ENCODE measurements at regions of chr1 and their contacts with region 1.

Region 1: DNA sequence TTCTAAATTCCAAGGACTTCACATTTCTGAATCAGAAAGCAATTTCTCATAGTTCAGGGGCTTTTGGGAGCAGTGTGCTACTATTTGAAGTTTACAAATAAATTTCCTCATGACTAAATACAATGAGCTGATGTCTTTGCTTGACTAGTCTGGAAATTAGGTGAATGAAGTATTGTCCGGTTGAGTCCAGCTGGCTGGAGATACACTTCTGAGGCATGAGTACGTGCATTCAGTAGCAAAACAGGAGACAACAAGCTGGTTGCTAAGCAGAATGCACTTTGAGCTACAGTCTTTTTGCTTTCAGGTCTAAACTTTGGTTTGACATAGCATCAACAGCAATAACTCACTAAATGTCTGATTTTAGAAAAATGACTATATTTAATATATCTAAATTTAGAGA is 27.1 kb downstream of the ZNHIT6 start:
- DNase-seq: peak in 1 of 2 experiments; percentile 69
- H3K4me3 ChIP-seq: no peak overlapping the region
- H3K27ac ChIP-seq: no peak overlapping the region
- H3K4me1 ChIP-seq: no peaks in the 10 kb centered on the region
- H3K27me3 ChIP-seq: no peaks in the 10 kb centered on the region
- CTCF ChIP-seq: no peak

Region 2: GRCh38 chr1:85865213-85865612 is 184.1 kb after region 1 on chr1:
- CTCF ChIA-PET with region 1: no interaction called
- POLR2A ChIA-PET with region 1: no interaction called
- intact Hi-C with region 1: no loop called
- DNase-seq: no peak
- H3K4me3 ChIP-seq: no peak overlapping the region
- H3K27ac ChIP-seq: no peak overlapping the region
- H3K4me1 ChIP-seq: no peaks in the 10 kb centered on the region
- H3K27me3 ChIP-seq: no peaks in the 10 kb centered on the region
- CTCF ChIP-seq: no peak

Region 3: DNA sequence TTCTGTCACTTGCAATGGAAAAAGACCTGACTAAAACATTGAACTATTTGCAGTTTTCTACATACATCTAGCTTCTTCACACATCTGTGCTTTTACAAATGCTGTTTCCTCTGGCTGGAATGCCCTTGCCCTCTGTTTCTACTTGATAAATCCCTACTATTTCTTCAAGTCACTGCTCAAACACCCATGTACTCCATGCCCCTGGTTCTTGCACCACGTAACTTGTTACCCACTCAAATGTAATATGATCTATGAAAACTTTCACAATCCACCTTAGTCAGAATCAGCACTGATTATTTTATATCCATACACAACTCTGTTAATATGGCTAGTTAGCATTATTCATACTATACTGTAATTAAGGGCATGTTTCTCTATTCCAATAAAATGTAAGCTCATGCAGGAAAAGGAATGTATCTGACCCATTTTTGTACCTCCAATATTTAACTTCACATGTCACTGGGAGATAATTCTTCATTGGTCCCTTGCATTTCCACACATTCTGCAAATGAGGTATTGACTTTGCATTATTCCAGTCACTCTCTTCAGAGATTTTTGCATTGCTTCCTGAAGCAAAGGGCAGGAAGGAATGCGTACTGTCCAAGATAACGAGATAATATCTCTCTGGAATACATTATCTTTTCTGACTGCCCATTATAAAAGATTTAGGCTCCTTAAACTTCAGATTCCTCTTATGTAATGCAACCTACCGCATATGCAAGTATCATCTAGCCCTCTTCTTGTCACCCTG is 317.2 kb after region 1 on chr1:
- CTCF ChIA-PET with region 1: interaction called, 21 read pairs
- POLR2A ChIA-PET with region 1: no interaction called
- intact Hi-C with region 1: no loop called
- DNase-seq: no peak
- H3K4me3 ChIP-seq: no peak overlapping the region
- H3K27ac ChIP-seq: no peak overlapping the region
- H3K4me1 ChIP-seq: no peaks in the 10 kb centered on the region
- H3K27me3 ChIP-seq: no peaks in the 10 kb centered on the region
- CTCF ChIP-seq: no peak

Measured in PC-9 (cell line).